Naive thymus-derived CD4-positive, alpha-beta T cell (primary cell): ENCODE measurements at regions of chr1 and their contacts with region 1.

Region 1: DNA sequence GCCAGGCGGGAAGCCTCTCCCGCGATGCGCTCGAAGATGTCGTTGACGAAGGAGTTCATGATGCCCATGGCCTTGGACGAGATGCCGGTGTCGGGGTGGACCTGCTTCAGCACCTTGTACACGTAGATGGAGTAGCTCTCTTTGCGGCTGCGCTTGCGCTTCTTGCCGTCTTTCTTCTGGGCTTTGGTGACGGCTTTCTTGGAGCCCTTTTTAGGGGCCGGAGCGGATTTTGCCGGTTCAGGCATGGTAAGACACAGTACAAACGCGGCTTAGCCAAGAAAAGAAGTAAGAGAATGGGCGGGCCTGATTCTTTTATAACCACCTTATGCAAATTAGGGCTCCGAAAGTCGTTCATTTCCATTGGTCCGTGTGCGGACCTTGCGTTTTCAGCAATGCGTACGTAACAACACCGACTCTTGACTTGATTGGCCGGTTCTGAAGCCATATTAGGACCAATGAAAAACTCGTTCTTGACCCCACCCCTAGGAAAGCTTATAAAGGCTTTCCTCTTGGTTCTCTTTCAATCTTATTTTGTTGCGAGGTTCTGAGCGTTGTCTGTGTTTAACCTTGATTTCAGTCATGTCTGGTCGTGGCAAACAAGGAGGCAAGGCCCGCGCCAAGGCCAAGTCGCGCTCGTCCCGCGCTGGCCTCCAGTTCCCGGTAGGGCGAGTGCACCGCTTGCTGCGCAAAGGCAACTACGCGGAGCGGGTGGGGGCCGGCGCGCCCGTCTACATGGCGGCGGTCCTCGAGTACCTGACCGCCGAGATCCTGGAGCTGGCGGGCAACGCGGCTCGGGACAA is 12.8 kb upstream of the BOLA1 start:
- DNase-seq: peak; percentile 71 to 98 (median 95)
- ATAC-seq: peak; percentile 79
- H3K4me3 ChIP-seq: peak overlapping the region; percentile 97
- H3K4me3 Mint-ChIP-seq: no peak overlapping the region
- H3K27ac ChIP-seq: peak overlapping the region; percentile 93
- H3K27ac Mint-ChIP-seq: no peak overlapping the region
- H3K4me1 ChIP-seq: peaks cover 17 to 28% of the 10 kb centered on the region in 2 donors
- H3K4me1 Mint-ChIP-seq: peaks cover 10 to 15% (median 12%) of the 10 kb centered on the region in 7 donors
- H3K27me3 ChIP-seq: no peaks in the 10 kb centered on the region
- H3K27me3 Mint-ChIP-seq: no peaks in the 10 kb centered on the region

Region 2: DNA sequence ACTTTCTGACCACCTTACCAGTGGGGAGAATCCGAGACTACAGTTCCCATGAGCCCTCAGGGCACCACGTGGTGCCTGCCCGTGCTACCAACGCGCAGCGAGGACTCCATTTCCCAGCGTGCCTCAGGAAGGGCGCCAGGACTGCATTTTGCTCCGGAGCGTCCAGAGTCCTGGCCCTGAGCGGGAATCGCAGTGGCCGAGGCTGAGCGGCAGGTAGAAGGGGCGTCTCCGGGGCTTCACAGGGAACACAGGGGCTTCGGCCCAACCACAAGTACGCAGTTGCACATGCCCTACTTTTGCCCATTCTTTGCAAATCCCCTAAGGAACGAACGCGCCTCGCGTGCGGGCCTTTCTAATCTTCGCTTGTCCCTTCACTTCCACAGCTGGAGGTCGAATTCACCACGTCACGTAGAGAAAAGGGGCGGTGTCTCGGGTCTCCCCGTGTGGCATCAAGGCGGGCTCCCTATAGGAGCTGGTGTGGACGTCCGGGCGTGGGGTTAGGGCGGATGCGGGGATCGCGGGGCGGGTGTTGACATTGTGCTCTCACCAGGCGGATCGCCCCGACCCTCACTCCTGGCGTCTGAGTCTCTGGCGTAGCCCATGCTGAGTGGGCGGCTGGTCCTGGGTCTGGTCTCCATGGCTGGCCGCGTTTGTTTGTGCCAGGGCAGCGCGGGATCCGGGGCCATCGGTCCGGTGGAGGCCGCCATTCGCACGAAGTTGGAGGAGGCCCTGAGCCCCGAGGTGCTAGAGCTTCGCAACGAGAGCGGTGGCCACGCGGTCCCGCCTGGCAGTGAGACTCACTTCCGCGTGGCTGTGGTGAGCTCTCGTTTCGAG is 13.1 kb after region 1 on chr1 and contains the start of gene BOLA1:
- CTCF ChIA-PET with region 1: interaction called, 4 read pairs
- POLR2A ChIA-PET with region 1: interaction called, 214 read pairs
- intact Hi-C with region 1: loop called (anchors 1 kb)
- DNase-seq: peak; percentile 59 to 83 (median 71)
- ATAC-seq: peak; percentile 99
- H3K4me3 ChIP-seq: peak within 1 kb of the TSS; percentile 91
- H3K4me3 Mint-ChIP-seq: peak within 1 kb of the TSS; percentile 85 to 97 (median 90)
- H3K27ac ChIP-seq: peak within 1 kb of the TSS; percentile 85
- H3K27ac Mint-ChIP-seq: peak within 1 kb of the TSS; percentile 86 to 96 (median 93)
- H3K4me1 ChIP-seq: peaks cover 0 to 6% of the 10 kb centered on the region in 2 donors
- H3K4me1 Mint-ChIP-seq: peaks cover 11 to 27% (median 20%) of the 10 kb centered on the region in 7 donors
- H3K27me3 ChIP-seq: no peaks in the 10 kb centered on the region
- H3K27me3 Mint-ChIP-seq: no peaks in the 10 kb centered on the region
- total RNA-seq, gene BOLA1: 7.8 to 28.9 (median 18.2) TPM

Region 3: GRCh38 chr1:149962123-149962548 is 75.5 kb after region 1 on chr1:
- CTCF ChIA-PET with region 1: interaction called, 5 read pairs
- POLR2A ChIA-PET with region 1: interaction called, 16 read pairs
- intact Hi-C with region 1: loop called (anchors 1 to 2 kb)
- DNase-seq: peak in 7 of 9 donors; percentile 39 to 62 (median 57)
- ATAC-seq: peak; percentile 88
- H3K4me3 ChIP-seq: no peak overlapping the region
- H3K4me3 Mint-ChIP-seq: no peak overlapping the region
- H3K27ac ChIP-seq: no peak overlapping the region
- H3K27ac Mint-ChIP-seq: peak overlapping the region in 3 of 9 donors; percentile 45 to 71 (median 64)
- H3K4me1 ChIP-seq: no peaks in the 10 kb centered on the region
- H3K4me1 Mint-ChIP-seq: peaks cover 6 to 24% (median 19%) of the 10 kb centered on the region in 7 donors
- H3K27me3 ChIP-seq: no peaks in the 10 kb centered on the region
- H3K27me3 Mint-ChIP-seq: no peaks in the 10 kb centered on the region

Region 4: DNA sequence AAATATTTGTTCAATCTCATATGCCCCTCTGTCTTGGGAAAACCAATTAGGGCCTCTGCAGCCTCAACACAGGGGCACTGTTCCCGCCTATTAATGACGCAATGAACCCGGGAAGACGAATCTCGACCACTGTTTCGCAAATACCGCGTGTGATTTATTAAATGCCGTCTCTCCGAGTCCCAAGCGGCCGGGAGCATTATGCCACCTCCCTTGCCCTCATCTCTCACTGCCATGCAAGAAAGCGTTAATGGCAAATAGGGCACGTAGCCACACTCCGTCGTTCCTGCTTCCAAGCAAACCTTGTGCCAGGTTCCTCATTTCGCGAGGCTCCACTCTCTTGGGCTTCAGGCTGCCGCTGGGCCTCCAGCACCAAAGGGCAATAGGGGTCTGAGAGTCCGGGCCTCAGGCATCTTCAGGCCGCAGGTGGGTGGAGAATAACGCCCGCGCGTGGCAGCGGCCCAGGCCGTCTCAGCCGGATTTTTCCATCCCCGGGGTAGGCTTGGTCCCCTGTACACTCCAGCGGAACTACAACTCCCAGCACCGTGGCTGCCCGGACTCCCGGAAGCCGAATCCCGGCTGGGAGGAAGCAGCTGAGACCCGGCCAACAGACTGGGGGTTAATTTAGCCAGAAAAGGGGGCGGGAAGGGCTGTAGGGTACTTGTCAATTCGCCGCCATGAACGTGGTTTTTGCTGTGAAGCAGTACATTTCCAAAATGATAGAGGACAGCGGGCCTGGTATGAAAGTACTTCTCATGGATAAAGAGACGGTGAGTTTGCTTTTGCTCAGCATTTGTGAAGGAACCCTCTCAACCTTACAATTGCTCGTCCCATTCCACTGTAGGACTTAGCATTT is 180.8 kb after region 1 on chr1 and contains the start of gene VPS45:
- CTCF ChIA-PET with region 1: no interaction called
- POLR2A ChIA-PET with region 1: interaction called, 17 read pairs
- intact Hi-C with region 1: loop called in 1 of 2 experiments (anchors 1 kb)
- DNase-seq: peak; percentile 53 to 85 (median 70)
- ATAC-seq: peak; percentile 96
- H3K4me3 ChIP-seq: peak within 1 kb of the TSS; percentile 72
- H3K4me3 Mint-ChIP-seq: peak within 1 kb of the TSS; percentile 91 to 95 (median 94)
- H3K27ac ChIP-seq: peak within 1 kb of the TSS; percentile 63
- H3K27ac Mint-ChIP-seq: peak within 1 kb of the TSS; percentile 88 to 96 (median 92)
- H3K4me1 ChIP-seq: peaks cover 0 to 8% of the 10 kb centered on the region in 2 donors
- H3K4me1 Mint-ChIP-seq: peaks cover 16 to 46% (median 37%) of the 10 kb centered on the region in 7 donors
- H3K27me3 ChIP-seq: no peaks in the 10 kb centered on the region
- H3K27me3 Mint-ChIP-seq: peaks cover 0 to 3% (median 0%) of the 10 kb centered on the region in 5 donors
- total RNA-seq, gene VPS45: 20.3 to 37.7 (median 29.3) TPM

Region 5: GRCh38 chr1:150083907-150084306 is 197.3 kb after region 1 on chr1:
- CTCF ChIA-PET with region 1: no interaction called
- POLR2A ChIA-PET with region 1: no interaction called
- intact Hi-C with region 1: no loop called
- DNase-seq: no peak
- ATAC-seq: no peak
- H3K4me3 ChIP-seq: no peak overlapping the region
- H3K4me3 Mint-ChIP-seq: no peak overlapping the region
- H3K27ac ChIP-seq: no peak overlapping the region
- H3K27ac Mint-ChIP-seq: peak overlapping the region in 2 of 9 donors; percentile 0 to 8
- H3K4me1 ChIP-seq: no peaks in the 10 kb centered on the region
- H3K4me1 Mint-ChIP-seq: peaks cover 0 to 10% (median 1%) of the 10 kb centered on the region in 7 donors
- H3K27me3 ChIP-seq: no peaks in the 10 kb centered on the region
- H3K27me3 Mint-ChIP-seq: no peaks in the 10 kb centered on the region

Region 6: GRCh38 chr1:150186789-150187559 is 300.4 kb after region 1 on chr1:
- CTCF ChIA-PET with region 1: interaction called, 3 read pairs
- POLR2A ChIA-PET with region 1: interaction called, 14 read pairs
- intact Hi-C with region 1: loop called in 1 of 2 experiments (anchors 1 kb)
- DNase-seq: peak in 7 of 9 donors; percentile 28 to 77 (median 68)
- ATAC-seq: peak; percentile 87
- H3K4me3 ChIP-seq: no peak overlapping the region
- H3K4me3 Mint-ChIP-seq: peak overlapping the region in 7 of 10 donors; percentile 6 to 74 (median 35)
- H3K27ac ChIP-seq: no peak overlapping the region
- H3K27ac Mint-ChIP-seq: peak overlapping the region in 7 of 9 donors; percentile 9 to 70 (median 33)
- H3K4me1 ChIP-seq: peaks cover 0 to 4% of the 10 kb centered on the region in 2 donors
- H3K4me1 Mint-ChIP-seq: peaks cover 7 to 13% (median 10%) of the 10 kb centered on the region in 7 donors
- H3K27me3 ChIP-seq: no peaks in the 10 kb centered on the region
- H3K27me3 Mint-ChIP-seq: no peaks in the 10 kb centered on the region